Activated CD4-positive, alpha-beta T cell treated with anti-CD3 and anti-CD28 coated beads, Interleukin-2, amount 10 ng/mL, durations not matched to agents 24 days and 14 days (primary cell): ENCODE measurements at regions of chr2 and their contacts with region 1.

Region 1: DNA sequence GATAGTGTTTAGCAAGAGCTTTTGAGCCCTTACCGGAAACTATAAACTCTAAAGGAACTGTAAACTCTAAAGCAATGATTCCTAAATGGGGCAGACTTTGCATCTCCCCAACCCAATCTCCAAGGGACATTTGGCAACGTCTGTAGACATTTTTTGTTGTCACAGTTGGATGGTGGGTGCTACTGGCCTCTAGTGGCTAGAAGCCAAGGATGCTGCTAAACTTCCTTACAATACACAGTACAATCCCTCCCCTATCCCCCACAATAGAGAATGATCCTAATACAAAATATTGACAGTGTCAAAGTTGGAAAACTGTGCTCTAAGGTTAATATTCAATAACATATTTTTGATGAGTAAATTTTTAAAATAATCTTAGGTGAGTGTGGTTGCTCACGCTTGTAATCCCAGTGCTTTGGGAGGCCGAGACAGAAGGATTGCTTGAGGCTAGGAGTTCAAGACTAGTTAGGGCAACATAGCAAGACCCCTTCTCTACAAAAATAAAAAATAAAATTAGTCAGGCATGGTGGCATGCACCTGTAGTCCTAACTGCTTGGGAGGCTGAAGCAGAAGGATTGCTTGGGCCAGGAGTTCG is 66.7 kb downstream of the PTPN4 start:
- DNase-seq: peak; percentile 81
- H3K4me3 Mint-ChIP-seq: no peak overlapping the region
- H3K27ac Mint-ChIP-seq: no peak overlapping the region
- H3K4me1 Mint-ChIP-seq: peaks cover 18% of the 10 kb centered on the region
- H3K27me3 Mint-ChIP-seq: no peaks in the 10 kb centered on the region

Region 2: GRCh38 chr2:119702918-119703401 is 123.5 kb before region 1 on chr2:
- intact Hi-C with region 1: loop called (anchors 1 kb)
- DNase-seq: peak; percentile 91
- H3K4me3 Mint-ChIP-seq: no peak overlapping the region
- H3K27ac Mint-ChIP-seq: no peak overlapping the region
- H3K4me1 Mint-ChIP-seq: peaks cover 10% of the 10 kb centered on the region
- H3K27me3 Mint-ChIP-seq: no peaks in the 10 kb centered on the region

Region 3: GRCh38 chr2:119753041-119753929 is 73.2 kb before region 1 on chr2:
- intact Hi-C with region 1: loop called (anchors 1 kb)
- DNase-seq: peak; percentile 81
- H3K4me3 Mint-ChIP-seq: no peak overlapping the region
- H3K27ac Mint-ChIP-seq: no peak overlapping the region
- H3K4me1 Mint-ChIP-seq: peaks cover 11% of the 10 kb centered on the region
- H3K27me3 Mint-ChIP-seq: peaks cover 18% of the 10 kb centered on the region